CD4-positive, alpha-beta T cell (primary cell): ENCODE measurements at regions of chr16 and their contacts with region 1.

Region 1: DNA sequence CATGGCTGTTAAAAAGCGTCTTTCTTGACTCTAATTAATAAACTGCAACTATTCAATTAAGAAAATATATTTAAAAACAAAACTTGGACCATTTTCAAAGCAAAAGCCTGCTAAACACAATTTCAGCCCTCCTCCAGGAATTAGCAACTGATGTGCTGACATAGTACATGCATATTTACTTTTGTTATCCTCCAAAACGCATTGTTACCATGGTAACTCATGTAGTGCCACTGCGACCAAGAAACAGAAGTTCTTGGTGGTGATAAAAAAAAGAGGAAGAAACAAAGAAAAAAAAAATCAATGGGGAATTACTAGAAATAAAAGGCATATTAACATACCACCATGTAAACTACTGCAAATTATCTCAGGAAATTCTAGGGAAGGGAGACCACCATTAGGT is 793.4 kb upstream of the CDH8 start:
- DNase-seq: no peak
- ATAC-seq: no peak
- H3K4me3 ChIP-seq: no peak overlapping the region
- H3K4me3 Mint-ChIP-seq: no peak overlapping the region
- H3K27ac ChIP-seq: no peak overlapping the region
- H3K27ac Mint-ChIP-seq: no peak overlapping the region
- H3K4me1 ChIP-seq: no peaks in the 10 kb centered on the region
- H3K4me1 Mint-ChIP-seq: no peaks in the 10 kb centered on the region
- H3K27me3 ChIP-seq: no peaks in the 10 kb centered on the region
- H3K27me3 Mint-ChIP-seq: no peaks in the 10 kb centered on the region
- CTCF ChIP-seq: no peak

Region 2: GRCh38 chr16:62817034-62817433 is 12.6 kb before region 1 on chr16:
- CTCF ChIA-PET with region 1: no interaction called
- POLR2A ChIA-PET with region 1: no interaction called
- intact Hi-C with region 1: no loop called
- DNase-seq: no peak
- ATAC-seq: no peak
- H3K4me3 ChIP-seq: no peak overlapping the region
- H3K4me3 Mint-ChIP-seq: no peak overlapping the region
- H3K27ac ChIP-seq: no peak overlapping the region
- H3K27ac Mint-ChIP-seq: no peak overlapping the region
- H3K4me1 ChIP-seq: no peaks in the 10 kb centered on the region
- H3K4me1 Mint-ChIP-seq: no peaks in the 10 kb centered on the region
- H3K27me3 ChIP-seq: no peaks in the 10 kb centered on the region
- H3K27me3 Mint-ChIP-seq: no peaks in the 10 kb centered on the region
- CTCF ChIP-seq: no peak

Region 3: DNA sequence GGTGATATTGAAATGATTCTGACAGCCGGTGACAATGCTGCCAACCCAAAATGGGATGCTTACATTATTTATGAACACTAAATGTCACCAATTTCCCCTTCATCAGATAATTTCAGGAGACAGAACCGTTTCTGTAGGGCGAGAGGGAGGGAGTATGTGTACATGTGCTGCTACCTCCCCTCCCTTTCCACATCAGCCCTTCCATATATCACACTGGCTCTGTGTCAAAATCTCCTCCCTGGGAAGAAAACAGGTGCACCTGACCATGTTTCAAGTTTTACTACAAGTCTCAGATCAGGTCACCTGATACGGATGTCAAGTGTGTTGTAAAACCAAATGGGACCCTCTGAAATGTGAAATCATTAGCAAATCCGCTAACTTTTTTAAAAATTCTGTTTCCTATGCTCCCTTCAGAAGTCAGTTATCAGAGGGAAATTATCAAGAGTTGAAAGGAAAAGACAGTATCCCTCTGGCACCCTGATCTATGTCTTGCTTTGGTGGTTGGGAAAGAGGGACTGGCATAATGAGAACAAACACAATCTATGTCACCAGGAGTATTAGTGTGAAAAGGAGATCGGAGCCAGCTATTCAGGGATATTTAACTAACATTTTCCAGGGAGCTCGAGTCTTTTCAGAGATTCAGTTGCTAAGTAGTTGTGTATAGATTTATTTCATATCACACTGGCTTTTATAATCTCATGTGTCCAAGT is 208.9 kb after region 1 on chr16:
- CTCF ChIA-PET with region 1: no interaction called
- POLR2A ChIA-PET with region 1: no interaction called
- intact Hi-C with region 1: loop called in 1 of 2 experiments (anchors 10 kb)
- DNase-seq: no peak
- ATAC-seq: no peak
- H3K4me3 ChIP-seq: no peak overlapping the region
- H3K4me3 Mint-ChIP-seq: no peak overlapping the region
- H3K27ac ChIP-seq: no peak overlapping the region
- H3K27ac Mint-ChIP-seq: no peak overlapping the region
- H3K4me1 ChIP-seq: no peaks in the 10 kb centered on the region
- H3K4me1 Mint-ChIP-seq: no peaks in the 10 kb centered on the region
- H3K27me3 ChIP-seq: no peaks in the 10 kb centered on the region
- H3K27me3 Mint-ChIP-seq: no peaks in the 10 kb centered on the region
- CTCF ChIP-seq: no peak